Activated CD4-positive, alpha-beta T cell treated with anti-CD3 and anti-CD28 coated beads for 36 hours (primary cell): ENCODE measurements at regions of chr4 and their contacts with region 1.

Region 1: DNA sequence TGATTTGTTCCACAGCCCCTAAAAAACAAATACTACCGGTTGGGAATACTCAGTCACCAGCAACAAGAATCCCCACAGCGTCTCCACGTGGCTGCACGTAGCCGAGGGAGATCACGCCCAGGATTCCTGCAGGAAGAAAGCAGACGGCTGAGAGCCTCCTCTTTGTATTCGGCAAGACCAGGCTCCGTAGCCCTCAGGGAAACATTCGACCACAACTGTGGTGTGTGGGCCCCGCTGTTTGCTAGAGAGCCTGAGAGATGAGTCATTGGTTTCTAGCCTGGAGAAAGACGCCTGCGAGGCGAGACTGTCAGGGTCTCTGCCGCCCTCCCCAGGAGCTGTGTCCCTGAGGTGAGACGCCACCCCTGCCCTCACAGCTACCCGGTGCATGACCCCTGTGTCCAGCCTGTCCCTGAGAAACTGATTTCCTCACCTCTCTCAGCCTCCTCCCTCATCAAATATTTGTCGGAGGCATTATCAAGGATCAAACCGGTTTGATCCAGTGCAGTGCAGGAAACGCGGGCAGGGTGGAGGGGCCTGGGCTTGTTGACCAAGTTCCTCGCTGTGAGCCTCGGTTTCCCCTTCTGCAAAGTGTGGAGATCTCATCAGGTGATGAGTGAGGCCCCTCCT is 4.7 kb upstream of the S100P start:
- DNase-seq: peak; percentile 90
- ATAC-seq: peak; percentile 88
- H3K4me3 Mint-ChIP-seq: peak overlapping the region; percentile 39
- H3K27ac Mint-ChIP-seq: peak overlapping the region; percentile 91
- H3K4me1 Mint-ChIP-seq: peaks cover 57% of the 10 kb centered on the region
- H3K27me3 Mint-ChIP-seq: no peaks in the 10 kb centered on the region

Region 2: DNA sequence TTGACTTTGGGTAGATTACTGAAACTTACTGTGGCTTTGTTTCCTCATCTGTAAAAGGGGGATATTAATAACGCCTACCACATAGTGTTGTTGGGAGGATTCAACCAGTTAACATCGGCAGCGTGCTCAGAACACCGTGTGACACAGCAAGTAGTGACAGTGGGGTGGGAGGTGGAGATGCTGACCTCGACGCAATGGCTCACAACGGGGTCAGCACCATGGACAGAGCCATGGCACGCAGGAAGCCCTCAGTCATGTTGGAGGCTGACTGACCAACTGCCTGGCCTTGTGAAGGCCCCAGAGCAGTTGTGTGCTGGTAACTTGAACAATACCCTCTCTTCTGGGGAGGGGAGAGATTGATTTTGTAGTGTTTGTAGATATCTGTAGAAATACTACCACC is 326.1 kb before region 1 on chr4:
- CTCF ChIA-PET with region 1: no interaction called
- POLR2A ChIA-PET with region 1: no interaction called
- intact Hi-C with region 1: no loop called
- DNase-seq: peak; percentile 61
- ATAC-seq: no peak
- H3K4me3 Mint-ChIP-seq: no peak overlapping the region
- H3K27ac Mint-ChIP-seq: no peak overlapping the region
- H3K4me1 Mint-ChIP-seq: no peaks in the 10 kb centered on the region
- H3K27me3 Mint-ChIP-seq: peaks cover 7% of the 10 kb centered on the region

Region 3: DNA sequence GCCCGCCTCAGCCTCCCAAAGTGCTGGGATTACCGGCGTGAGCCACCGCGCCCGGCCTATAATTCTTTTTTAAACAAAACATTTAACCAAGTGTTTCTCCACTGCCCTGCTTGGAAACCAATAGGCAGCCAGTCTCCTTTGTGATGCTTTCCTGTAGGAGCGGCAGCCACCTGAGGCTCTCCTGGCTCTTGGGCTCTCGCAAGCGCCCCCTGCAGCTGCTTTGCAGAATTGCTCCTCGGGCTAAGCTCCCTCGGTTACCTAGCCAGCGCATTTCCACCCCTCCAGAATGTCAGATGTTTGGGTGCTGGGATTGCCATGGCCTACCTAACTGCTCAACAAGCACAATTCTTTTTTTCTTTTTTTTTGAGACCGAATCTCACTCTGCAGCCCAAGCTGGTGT is 12.4 kb after region 1 on chr4:
- CTCF ChIA-PET with region 1: interaction called, 8 read pairs
- POLR2A ChIA-PET with region 1: no interaction called
- intact Hi-C with region 1: loop called in 1 of 2 experiments (anchors 2 kb)
- DNase-seq: peak; percentile 77
- ATAC-seq: no peak
- H3K4me3 Mint-ChIP-seq: no peak overlapping the region
- H3K27ac Mint-ChIP-seq: no peak overlapping the region
- H3K4me1 Mint-ChIP-seq: peaks cover 66% of the 10 kb centered on the region
- H3K27me3 Mint-ChIP-seq: no peaks in the 10 kb centered on the region